ENCODE measurements at regions of chr1 and their contacts with region 1.

Region 1: GRCh38 chr1:220733090-220733601 is 15.0 kb upstream of the MTARC2 start:
- DNase-seq: peak; percentile 91
- H3K4me3 Mint-ChIP-seq: no peak overlapping the region
- H3K27ac Mint-ChIP-seq: no peak overlapping the region
- H3K4me1 Mint-ChIP-seq: peaks cover 15% of the 10 kb centered on the region
- H3K27me3 Mint-ChIP-seq: no peaks in the 10 kb centered on the region

Region 2: DNA sequence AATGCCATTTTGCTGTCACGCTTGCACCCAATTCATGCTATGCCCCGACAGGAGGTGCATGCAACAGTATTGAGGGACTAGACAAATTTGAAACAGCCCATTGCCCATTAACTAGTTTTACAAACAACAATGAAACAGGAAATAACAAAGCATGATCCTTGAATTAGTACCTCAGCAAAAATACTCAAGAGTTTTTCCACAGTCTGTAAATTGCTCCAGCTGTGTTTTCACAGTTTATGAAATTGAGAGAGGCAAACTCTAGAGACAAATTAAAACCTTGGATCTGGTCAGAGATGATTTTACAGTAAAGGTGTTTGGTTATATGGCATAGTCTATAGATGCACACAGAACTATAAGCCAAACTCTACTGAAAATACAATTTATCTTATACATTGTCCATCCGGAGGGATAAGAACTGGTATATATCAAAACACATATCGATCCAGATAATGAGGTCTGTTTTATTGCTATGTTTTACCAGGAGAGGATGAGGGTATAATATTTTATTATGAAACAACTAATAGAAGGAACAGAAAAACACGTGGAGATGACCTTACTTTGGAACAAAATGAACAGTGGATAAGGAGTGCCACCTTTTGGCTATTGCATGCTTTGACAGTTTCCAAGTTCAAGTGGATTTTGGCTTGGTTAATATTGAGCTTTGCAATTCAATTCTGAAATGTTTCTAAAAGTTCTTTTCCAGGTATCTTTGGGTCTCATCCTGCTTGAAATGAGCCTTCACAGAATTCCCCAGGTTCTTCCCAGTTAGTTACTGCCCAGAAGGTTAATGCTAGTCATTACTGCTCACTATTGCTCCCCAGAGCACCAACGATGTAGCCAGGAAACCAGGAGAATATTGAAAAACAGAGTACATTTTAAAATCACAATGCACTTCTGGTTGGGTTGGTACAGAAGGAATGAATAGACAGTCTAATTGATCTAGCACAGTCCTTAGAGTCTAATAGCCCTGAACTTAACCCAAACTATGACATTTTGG is 1165.9 kb before region 1 on chr1:
- CTCF ChIA-PET with region 1: no interaction called
- intact Hi-C with region 1: no loop called
- DNase-seq: no peak
- H3K4me3 Mint-ChIP-seq: no peak overlapping the region
- H3K27ac Mint-ChIP-seq: no peak overlapping the region
- H3K4me1 Mint-ChIP-seq: no peaks in the 10 kb centered on the region
- H3K27me3 Mint-ChIP-seq: no peaks in the 10 kb centered on the region

Region 3: GRCh38 chr1:219871427-219872057 is 861.6 kb before region 1 on chr1:
- CTCF ChIA-PET with region 1: no interaction called
- intact Hi-C with region 1: no loop called
- DNase-seq: no peak
- H3K4me3 Mint-ChIP-seq: no peak overlapping the region
- H3K27ac Mint-ChIP-seq: no peak overlapping the region
- H3K4me1 Mint-ChIP-seq: no peaks in the 10 kb centered on the region
- H3K27me3 Mint-ChIP-seq: no peaks in the 10 kb centered on the region

Region 4: GRCh38 chr1:220046052-220046930 is 686.9 kb before region 1 on chr1 and contains the start of gene EPRS1:
- CTCF ChIA-PET with region 1: no interaction called
- intact Hi-C with region 1: loop called (anchors 1 kb)
- DNase-seq: peak; percentile 95
- H3K4me3 Mint-ChIP-seq: peak within 1 kb of the TSS; percentile 99
- H3K27ac Mint-ChIP-seq: peak within 1 kb of the TSS; percentile 98
- H3K4me1 Mint-ChIP-seq: peaks cover 27% of the 10 kb centered on the region
- H3K27me3 Mint-ChIP-seq: no peaks in the 10 kb centered on the region
- total RNA-seq, gene EPRS1: 227 to 229 TPM

Region 5: DNA sequence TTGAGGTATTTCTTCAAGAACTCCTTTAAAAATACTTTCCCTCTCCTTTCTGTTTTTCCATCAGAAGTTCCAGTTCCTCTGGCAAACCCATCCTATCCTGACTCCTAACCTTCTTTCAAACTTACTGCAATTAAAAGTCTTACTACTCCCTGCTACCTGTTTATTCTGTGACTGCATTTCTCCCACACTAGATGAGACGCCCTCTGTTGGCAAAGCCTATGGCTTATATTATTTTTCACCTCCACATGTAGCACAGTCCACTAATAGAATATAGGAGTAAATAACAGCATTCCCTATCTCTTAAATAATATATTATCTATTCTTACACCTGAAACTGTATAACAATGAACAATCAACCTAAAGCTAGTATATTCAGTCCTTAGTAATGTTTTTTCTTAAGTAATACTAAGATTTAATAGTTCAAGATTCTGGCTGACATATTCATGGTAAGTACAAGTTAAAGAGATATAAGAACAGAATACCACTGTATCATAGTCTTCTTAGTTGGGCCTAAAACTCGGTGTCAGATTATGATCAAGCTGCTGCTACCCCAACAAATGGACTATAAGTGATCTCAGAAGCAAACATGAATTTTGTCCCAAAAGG is 515.7 kb before region 1 on chr1:
- CTCF ChIA-PET with region 1: no interaction called
- intact Hi-C with region 1: loop called (anchors 1 kb)
- DNase-seq: no peak
- H3K4me3 Mint-ChIP-seq: no peak overlapping the region
- H3K27ac Mint-ChIP-seq: no peak overlapping the region
- H3K4me1 Mint-ChIP-seq: peaks cover 28% of the 10 kb centered on the region
- H3K27me3 Mint-ChIP-seq: no peaks in the 10 kb centered on the region

Region 6: DNA sequence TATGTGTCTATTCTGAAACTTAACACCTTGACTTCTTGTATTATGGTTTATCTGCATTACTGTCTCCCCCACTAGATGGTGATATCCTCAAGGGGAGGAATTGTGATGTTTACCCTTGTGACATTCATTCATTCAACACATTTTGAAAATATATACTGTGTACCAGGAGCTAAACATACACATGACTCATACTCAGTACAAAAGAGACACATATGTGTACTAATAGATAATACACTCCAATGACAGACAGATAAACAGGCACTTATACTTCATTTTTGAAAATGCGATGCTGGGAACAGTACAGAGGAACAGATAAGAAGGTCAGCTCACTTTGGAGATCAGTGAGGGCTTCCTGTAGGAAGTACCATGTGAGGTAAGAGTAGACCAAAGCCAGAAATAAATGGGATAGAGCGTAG is 452.0 kb before region 1 on chr1:
- CTCF ChIA-PET with region 1: no interaction called
- intact Hi-C with region 1: loop called (anchors 1 kb)
- DNase-seq: no peak
- H3K4me3 Mint-ChIP-seq: no peak overlapping the region
- H3K27ac Mint-ChIP-seq: no peak overlapping the region
- H3K4me1 Mint-ChIP-seq: no peaks in the 10 kb centered on the region
- H3K27me3 Mint-ChIP-seq: peaks cover 2% of the 10 kb centered on the region

Region 7: GRCh38 chr1:220680085-220680687 is 53.0 kb before region 1 on chr1:
- CTCF ChIA-PET with region 1: interaction called, 7 read pairs
- intact Hi-C with region 1: loop called (anchors 1 kb)
- DNase-seq: peak; percentile 9
- H3K4me3 Mint-ChIP-seq: no peak overlapping the region
- H3K27ac Mint-ChIP-seq: no peak overlapping the region
- H3K4me1 Mint-ChIP-seq: no peaks in the 10 kb centered on the region
- H3K27me3 Mint-ChIP-seq: no peaks in the 10 kb centered on the region

Region 8: GRCh38 chr1:220748089-220748934 is 15.2 kb after region 1 on chr1 and contains the start of gene MTARC2:
- CTCF ChIA-PET with region 1: interaction called, 17 read pairs
- intact Hi-C with region 1: no loop called
- DNase-seq: peak; percentile 16
- H3K4me3 Mint-ChIP-seq: peak within 1 kb of the TSS; percentile 59
- H3K27ac Mint-ChIP-seq: no peak within 1 kb of the TSS
- H3K4me1 Mint-ChIP-seq: peaks cover 9% of the 10 kb centered on the region
- H3K27me3 Mint-ChIP-seq: peaks cover 68% of the 10 kb centered on the region
- total RNA-seq, gene MTARC2: not detected